Activated CD8-positive, alpha-beta memory T cell treated with anti-CD3 and anti-CD28 coated beads, Interleukin-2, amount 10 ng/mL, durations not matched to agents 7 days and 5 days (primary cell): ENCODE measurements at regions of chr1 and their contacts with region 1.

Region 1: DNA sequence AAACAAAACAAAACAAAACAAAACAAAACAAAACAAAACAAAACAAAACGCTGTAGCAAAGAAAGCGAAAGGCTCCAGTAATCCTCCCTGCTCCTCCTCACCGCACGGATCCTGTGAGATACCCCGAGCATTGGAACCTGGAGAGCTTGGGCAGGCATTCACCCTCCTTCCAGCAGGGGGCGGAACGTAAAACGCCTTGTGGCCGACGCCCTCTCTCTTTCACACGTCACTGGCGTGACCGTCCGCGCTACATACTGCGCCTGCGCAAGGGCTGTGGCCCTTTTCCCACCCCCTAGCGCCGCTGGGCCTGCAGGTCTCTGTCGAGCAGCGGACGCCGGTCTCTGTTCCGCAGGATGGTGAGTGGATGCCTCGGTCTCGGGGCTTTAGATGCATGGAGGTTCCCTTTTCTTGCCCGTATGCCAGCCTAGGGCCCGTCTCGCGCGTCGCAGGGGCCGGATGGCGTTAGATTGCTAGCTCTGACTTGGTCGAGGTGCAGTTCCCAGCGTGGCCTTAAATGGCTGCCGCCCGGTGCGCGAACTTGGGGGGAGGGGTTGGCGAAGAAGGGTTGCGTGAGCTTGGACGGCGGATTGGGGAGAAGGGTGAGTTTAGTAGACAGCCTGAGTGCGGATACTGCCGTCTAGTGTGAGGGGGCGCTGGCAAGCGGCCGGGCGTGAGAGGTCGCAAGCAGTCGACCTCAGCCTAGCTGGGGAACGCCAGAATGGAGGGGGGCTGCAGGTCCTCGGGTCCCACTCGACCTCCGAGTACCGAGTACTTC is at the start of gene RPL5:
- DNase-seq: peak; percentile 98
- ATAC-seq: peak; percentile 89
- H3K4me3 Mint-ChIP-seq: peak within 1 kb of the TSS; percentile 99
- H3K27ac Mint-ChIP-seq: peak within 1 kb of the TSS; percentile 97
- H3K4me1 Mint-ChIP-seq: peaks cover 44% of the 10 kb centered on the region
- H3K27me3 Mint-ChIP-seq: no peaks in the 10 kb centered on the region
- total RNA-seq, gene RPL5: 581 to 800 TPM

Region 2: GRCh38 chr1:92817986-92818764 is 13.8 kb before region 1 on chr1:
- CTCF ChIA-PET with region 1: interaction called, 22 read pairs
- DNase-seq: no peak
- ATAC-seq: peak; percentile 61
- H3K4me3 Mint-ChIP-seq: no peak overlapping the region
- H3K27ac Mint-ChIP-seq: no peak overlapping the region
- H3K4me1 Mint-ChIP-seq: no peaks in the 10 kb centered on the region
- H3K27me3 Mint-ChIP-seq: peaks cover 33% of the 10 kb centered on the region

Region 3: DNA sequence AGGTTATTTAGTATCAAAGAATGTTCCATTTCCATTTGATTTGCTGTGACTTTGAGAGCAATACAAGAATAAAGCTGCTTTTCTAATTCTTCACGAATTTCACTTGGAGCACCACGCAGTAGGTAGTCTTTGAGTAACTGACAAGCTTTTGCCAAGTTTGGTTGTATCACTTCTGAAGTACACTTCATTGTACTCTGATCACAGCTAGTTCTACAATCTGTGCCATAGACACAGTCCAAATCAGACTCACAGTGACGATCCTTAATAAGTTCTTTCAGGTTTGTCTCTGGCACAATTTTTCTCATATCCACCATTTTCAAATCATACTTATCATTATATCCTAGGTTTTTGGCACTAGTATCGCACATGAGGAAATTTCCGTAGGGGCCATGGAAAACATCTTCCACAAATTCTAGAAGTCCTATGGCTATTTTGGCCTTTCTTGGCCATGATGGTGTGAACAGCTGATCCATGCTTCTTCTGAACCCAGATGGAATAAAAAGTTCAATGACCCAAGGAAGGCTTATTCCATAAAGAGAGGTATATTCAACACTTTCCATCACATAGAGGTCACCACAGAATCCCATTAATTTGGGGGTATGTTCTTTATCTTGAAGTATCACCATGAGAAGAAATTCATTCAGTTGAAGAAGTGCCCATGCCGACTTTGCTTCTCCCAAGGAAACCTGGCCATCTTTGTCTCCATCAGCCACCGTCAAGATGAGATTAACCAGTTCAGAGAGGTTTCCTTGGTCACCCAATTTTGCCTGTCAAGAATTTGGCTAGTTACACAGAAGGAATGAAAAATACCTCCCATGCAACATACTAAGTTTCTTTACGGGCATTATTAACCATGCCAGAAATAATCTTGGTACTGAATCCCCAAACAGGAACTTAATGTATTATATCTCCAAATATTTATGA is 11.7 kb after region 1 on chr1:
- CTCF ChIA-PET with region 1: interaction called, 17 read pairs
- DNase-seq: no peak
- ATAC-seq: no peak
- H3K4me3 Mint-ChIP-seq: no peak overlapping the region
- H3K27ac Mint-ChIP-seq: no peak overlapping the region
- H3K4me1 Mint-ChIP-seq: peaks cover 20% of the 10 kb centered on the region
- H3K27me3 Mint-ChIP-seq: no peaks in the 10 kb centered on the region

Region 4: DNA sequence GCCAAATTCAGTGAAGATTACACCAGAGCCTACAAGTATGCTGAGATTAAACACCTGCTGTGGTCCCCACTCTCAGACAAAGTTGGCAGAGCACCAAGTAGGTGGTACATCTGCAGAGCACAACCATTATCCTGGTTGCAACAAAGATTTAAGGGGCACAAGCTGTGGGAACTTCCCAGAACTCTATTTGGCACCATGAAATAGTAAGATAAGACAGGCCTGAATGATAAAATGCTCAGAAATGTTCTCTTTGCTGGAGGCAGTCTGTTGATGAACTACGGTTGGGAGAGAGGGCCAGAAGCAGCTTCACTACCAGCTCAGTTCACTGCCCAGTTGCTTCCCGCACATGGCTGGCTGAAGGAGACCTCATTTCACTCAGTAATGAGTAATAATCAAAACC is 19.8 kb after region 1 on chr1:
- CTCF ChIA-PET with region 1: interaction called, 12 read pairs
- DNase-seq: no peak
- ATAC-seq: no peak
- H3K4me3 Mint-ChIP-seq: no peak overlapping the region
- H3K27ac Mint-ChIP-seq: no peak overlapping the region
- H3K4me1 Mint-ChIP-seq: peaks cover 6% of the 10 kb centered on the region
- H3K27me3 Mint-ChIP-seq: no peaks in the 10 kb centered on the region